Activated T-helper 2 cell treated with anti-CD3 and anti-CD28 coated beads, Interferon-gamma antibody, Interleukin-2, Interleukin-4, amounts not matched to agents 10 μg/mL and 5 μg/mL and 100 μg/mL, durations not matched to agents 14 hours and 24 hours and 36 hours (primary cell): ENCODE measurements at regions of chr1 and their contacts with region 1.

Region 1: GRCh38 chr1:222814536-222815439 is at the start of gene DISP1:
- DNase-seq: peak; percentile 63
- H3K4me3 Mint-ChIP-seq: peak within 1 kb of the TSS; percentile 88
- H3K27ac Mint-ChIP-seq: peak within 1 kb of the TSS; percentile 78
- H3K4me1 Mint-ChIP-seq: peaks cover 19% of the 10 kb centered on the region
- H3K27me3 Mint-ChIP-seq: peaks cover 10% of the 10 kb centered on the region
- total RNA-seq, gene DISP1: 1.7 and 2.0 TPM in 2 replicates

Region 2: GRCh38 chr1:222643938-222644635 is 170.7 kb before region 1 on chr1:
- intact Hi-C with region 1: loop called (anchors 10 kb)
- DNase-seq: peak; percentile 97
- H3K4me3 Mint-ChIP-seq: peak overlapping the region; percentile 99
- H3K27ac Mint-ChIP-seq: peak overlapping the region; percentile 94
- H3K4me1 Mint-ChIP-seq: peaks cover 18% of the 10 kb centered on the region
- H3K27me3 Mint-ChIP-seq: no peaks in the 10 kb centered on the region

Region 3: DNA sequence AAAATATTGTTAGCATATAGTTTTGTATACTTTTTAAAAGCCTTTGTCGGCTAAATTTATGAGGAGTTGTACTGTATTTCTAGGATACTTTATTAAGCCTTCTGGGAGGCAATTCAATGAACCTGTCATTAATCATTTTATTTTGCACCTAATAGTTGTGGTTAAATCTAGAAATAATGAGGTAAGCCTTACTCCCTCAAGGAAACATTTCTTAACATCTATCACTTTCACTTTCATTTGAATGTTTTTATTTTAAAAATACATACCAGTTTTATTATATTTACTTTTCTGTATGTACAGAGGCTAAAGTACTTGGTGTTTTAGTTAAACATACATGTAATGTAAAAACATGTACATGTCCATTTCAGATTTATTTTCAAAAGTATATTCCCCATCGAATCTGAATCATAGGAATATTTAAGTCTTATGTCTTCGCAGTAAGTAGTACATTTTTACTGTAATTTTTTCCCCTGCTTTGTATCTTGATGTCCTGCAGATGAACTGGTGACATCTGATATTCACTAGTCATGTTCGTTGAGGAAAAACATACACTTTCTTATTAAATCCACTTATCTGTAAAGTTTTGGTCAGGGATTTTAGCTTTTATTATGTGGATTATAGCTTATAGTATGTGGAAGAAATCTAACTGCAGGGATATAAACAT is 82.9 kb after region 1 on chr1:
- intact Hi-C with region 1: loop called (anchors 5 kb)
- DNase-seq: no peak
- H3K4me3 Mint-ChIP-seq: peak overlapping the region; percentile 4
- H3K27ac Mint-ChIP-seq: peak overlapping the region; percentile 77
- H3K4me1 Mint-ChIP-seq: peaks cover 12% of the 10 kb centered on the region
- H3K27me3 Mint-ChIP-seq: no peaks in the 10 kb centered on the region